ENCODE measurements at regions of chr1 and their contacts with region 1.

Region 1: GRCh38 chr1:211944733-211945500 is 90.4 kb downstream of the INTS7 start:
- DNase-seq: peak; percentile 96
- H3K4me3 Mint-ChIP-seq: peak overlapping the region; percentile 3
- H3K27ac Mint-ChIP-seq: peak overlapping the region; percentile 21
- H3K4me1 Mint-ChIP-seq: peaks cover 14% of the 10 kb centered on the region
- H3K27me3 Mint-ChIP-seq: no peaks in the 10 kb centered on the region
- CTCF ChIP-seq: peak; percentile 96

Region 2: GRCh38 chr1:211705467-211706091 is 239.3 kb before region 1 on chr1:
- CTCF ChIA-PET with region 1: interaction called, 32 read pairs
- POLR2A ChIA-PET with region 1: interaction called, 5 read pairs
- intact Hi-C with region 1: no loop called
- DNase-seq: peak; percentile 83
- H3K4me3 Mint-ChIP-seq: peak overlapping the region; percentile 4
- H3K27ac Mint-ChIP-seq: peak overlapping the region; percentile 7
- H3K4me1 Mint-ChIP-seq: peaks cover 14% of the 10 kb centered on the region
- H3K27me3 Mint-ChIP-seq: no peaks in the 10 kb centered on the region
- CTCF ChIP-seq: no peak

Region 3: DNA sequence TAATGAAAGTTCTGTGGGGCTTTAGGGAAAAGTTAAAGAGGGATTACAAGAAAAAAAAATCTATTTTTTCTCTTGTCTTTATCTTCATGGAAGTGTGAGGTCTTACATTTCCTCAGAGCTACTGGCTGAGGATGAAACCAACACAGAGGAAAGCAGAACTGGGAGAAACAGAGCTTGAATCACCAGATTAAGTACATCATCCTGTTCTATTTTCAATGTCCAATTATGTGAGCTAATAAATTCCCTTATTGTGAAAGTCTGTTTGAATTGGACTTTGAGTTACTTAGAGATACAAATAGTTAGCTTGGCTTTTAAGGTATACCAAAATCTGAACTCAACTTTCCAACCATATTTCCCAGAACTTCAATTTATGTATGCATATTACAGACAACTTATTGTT is 183.5 kb before region 1 on chr1:
- CTCF ChIA-PET with region 1: interaction called, 13 read pairs
- POLR2A ChIA-PET with region 1: no interaction called
- intact Hi-C with region 1: no loop called
- DNase-seq: no peak
- H3K4me3 Mint-ChIP-seq: no peak overlapping the region
- H3K27ac Mint-ChIP-seq: no peak overlapping the region
- H3K4me1 Mint-ChIP-seq: no peaks in the 10 kb centered on the region
- H3K27me3 Mint-ChIP-seq: no peaks in the 10 kb centered on the region
- CTCF ChIP-seq: no peak

Region 4: GRCh38 chr1:211843018-211843417 is 101.9 kb before region 1 on chr1:
- CTCF ChIA-PET with region 1: interaction called, 37 read pairs
- POLR2A ChIA-PET with region 1: no interaction called
- intact Hi-C with region 1: no loop called
- DNase-seq: peak; percentile 38
- H3K4me3 Mint-ChIP-seq: no peak overlapping the region
- H3K27ac Mint-ChIP-seq: no peak overlapping the region
- H3K4me1 Mint-ChIP-seq: peaks cover 10% of the 10 kb centered on the region
- H3K27me3 Mint-ChIP-seq: no peaks in the 10 kb centered on the region
- CTCF ChIP-seq: no peak

Region 5: DNA sequence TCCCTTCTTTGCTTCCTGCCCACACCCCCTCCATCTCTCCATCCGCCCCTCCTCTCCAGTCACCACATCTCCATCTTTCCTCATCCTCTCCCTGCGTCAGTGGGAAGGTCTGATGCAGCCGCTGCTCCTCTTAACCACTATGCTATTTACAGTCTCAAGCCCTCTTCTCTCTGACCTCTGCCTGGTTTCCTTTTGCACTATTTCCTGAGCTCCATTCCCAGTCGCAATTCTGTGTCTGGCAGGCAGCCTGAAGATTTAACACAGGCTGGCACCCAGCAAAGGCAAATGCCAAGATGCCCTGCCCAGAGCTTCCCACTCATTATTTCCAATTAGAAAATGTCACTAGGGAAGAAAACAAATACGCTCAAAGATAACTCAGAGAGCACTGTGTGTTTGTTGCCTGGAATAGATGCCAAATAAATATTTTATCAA is 24.8 kb before region 1 on chr1:
- CTCF ChIA-PET with region 1: interaction called, 25 read pairs
- POLR2A ChIA-PET with region 1: interaction called, 8 read pairs
- intact Hi-C with region 1: no loop called
- DNase-seq: peak; percentile 63
- H3K4me3 Mint-ChIP-seq: no peak overlapping the region
- H3K27ac Mint-ChIP-seq: no peak overlapping the region
- H3K4me1 Mint-ChIP-seq: peaks cover 28% of the 10 kb centered on the region
- H3K27me3 Mint-ChIP-seq: peaks cover 6% of the 10 kb centered on the region
- CTCF ChIP-seq: no peak

Region 6: GRCh38 chr1:212002536-212002935 is 57.6 kb after region 1 on chr1:
- CTCF ChIA-PET with region 1: no interaction called
- POLR2A ChIA-PET with region 1: no interaction called
- intact Hi-C with region 1: no loop called
- DNase-seq: no peak
- H3K4me3 Mint-ChIP-seq: no peak overlapping the region
- H3K27ac Mint-ChIP-seq: no peak overlapping the region
- H3K4me1 Mint-ChIP-seq: no peaks in the 10 kb centered on the region
- H3K27me3 Mint-ChIP-seq: no peaks in the 10 kb centered on the region
- CTCF ChIP-seq: no peak

Region 7: GRCh38 chr1:212062832-212063438 is 118.0 kb after region 1 on chr1:
- CTCF ChIA-PET with region 1: no interaction called
- POLR2A ChIA-PET with region 1: no interaction called
- intact Hi-C with region 1: no loop called
- DNase-seq: peak; percentile 73
- H3K4me3 Mint-ChIP-seq: no peak overlapping the region
- H3K27ac Mint-ChIP-seq: no peak overlapping the region
- H3K4me1 Mint-ChIP-seq: peaks cover 12% of the 10 kb centered on the region
- H3K27me3 Mint-ChIP-seq: no peaks in the 10 kb centered on the region
- CTCF ChIP-seq: peak; percentile 84